Gastrocnemius medialis (tissue), 4 donors: ENCODE measurements at regions of chr7 and their contacts with region 1.

Region 1: GRCh38 chr7:151226875-151227782 is at the start of gene ABCF2:
- DNase-seq: peak; percentile 97 to 99
- ATAC-seq: peak; percentile 97
- H3K4me3 ChIP-seq: peak within 1 kb of the TSS; percentile 70 to 90 (median 82)
- H3K27ac ChIP-seq: peak within 1 kb of the TSS; percentile 83 to 91 (median 85)
- H3K4me1 ChIP-seq: peaks cover 27 to 32% of the 10 kb centered on the region in 2 donors
- H3K27me3 ChIP-seq: no peaks in the 10 kb centered on the region
- CTCF ChIP-seq: no peak
- POLR2A ChIP-seq: peak; percentile 74 to 83
- total RNA-seq, gene ABCF2: 73.3 to 119 (median 96.3) TPM

Region 2: GRCh38 chr7:151085691-151086620 is 141.2 kb before region 1 on chr7 and contains the start of gene AGAP3:
- in situ Hi-C with region 1: no loop called
- intact Hi-C with region 1: loop called (anchors 5 kb)
- DNase-seq: peak; percentile 83 to 86
- ATAC-seq: peak; percentile 44 to 55
- H3K4me3 ChIP-seq: peak within 1 kb of the TSS; percentile 72 to 95 (median 84)
- H3K27ac ChIP-seq: peak within 1 kb of the TSS; percentile 86 to 96 (median 92)
- H3K4me1 ChIP-seq: peaks cover 44 to 56% of the 10 kb centered on the region in 2 donors
- H3K27me3 ChIP-seq: no peaks in the 10 kb centered on the region
- CTCF ChIP-seq: no peak
- POLR2A ChIP-seq: peak; percentile 79 to 85
- total RNA-seq, gene AGAP3: 31.1 to 65.3 (median 36.3) TPM

Region 3: DNA sequence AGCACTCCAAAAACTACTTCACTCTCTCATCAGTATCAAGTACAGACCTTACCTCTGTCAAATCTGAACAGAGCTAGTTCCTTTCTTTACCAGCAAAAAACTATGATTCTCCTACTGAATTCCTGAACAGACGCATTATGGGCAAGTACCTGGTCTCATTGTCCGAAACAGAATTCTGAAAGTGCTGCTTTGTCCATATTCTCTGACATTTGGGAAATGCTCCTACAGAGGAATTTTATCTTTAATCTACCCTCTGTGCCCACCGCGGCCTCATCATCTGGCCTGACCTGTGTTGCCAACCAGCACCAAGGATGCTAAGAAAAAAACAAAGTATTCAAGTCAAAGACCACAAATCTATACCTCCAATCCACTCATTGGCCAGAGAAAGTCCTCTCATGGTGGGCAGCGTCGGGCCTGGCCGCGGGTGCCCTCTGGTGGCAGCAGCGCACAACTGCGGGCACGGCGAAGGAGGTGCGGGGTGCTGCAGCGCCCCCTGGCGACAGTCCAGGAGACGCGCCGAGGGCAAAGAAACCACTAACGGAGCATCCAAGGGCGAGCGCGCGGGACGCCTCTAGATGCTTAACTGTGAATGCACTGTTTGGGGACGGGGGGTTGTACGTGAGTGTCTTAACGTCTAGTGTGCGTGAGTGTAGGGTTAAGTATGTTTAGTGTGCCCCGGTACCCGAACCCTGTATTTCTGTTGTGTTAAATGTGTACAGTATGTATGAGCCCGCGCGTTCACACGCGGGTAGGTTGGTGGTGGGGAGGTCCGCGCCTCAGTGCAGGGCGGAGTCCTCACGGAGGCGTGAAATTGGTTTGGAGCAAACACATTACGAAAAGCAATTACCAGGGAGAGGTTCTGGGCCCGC is 54.6 kb before region 1 on chr7:
- in situ Hi-C with region 1: no loop called
- intact Hi-C with region 1: loop called (anchors 5 kb)
- DNase-seq: peak; percentile 53 to 71
- ATAC-seq: peak; percentile 60 to 79
- H3K4me3 ChIP-seq: no peak overlapping the region
- H3K27ac ChIP-seq: peak overlapping the region in 1 of 4 donors; percentile 33
- H3K4me1 ChIP-seq: peaks cover 3 to 17% of the 10 kb centered on the region in 2 donors
- H3K27me3 ChIP-seq: no peaks in the 10 kb centered on the region
- CTCF ChIP-seq: peak; percentile 99 to 100 (median 100)
- POLR2A ChIP-seq: no peak

Region 4: DNA sequence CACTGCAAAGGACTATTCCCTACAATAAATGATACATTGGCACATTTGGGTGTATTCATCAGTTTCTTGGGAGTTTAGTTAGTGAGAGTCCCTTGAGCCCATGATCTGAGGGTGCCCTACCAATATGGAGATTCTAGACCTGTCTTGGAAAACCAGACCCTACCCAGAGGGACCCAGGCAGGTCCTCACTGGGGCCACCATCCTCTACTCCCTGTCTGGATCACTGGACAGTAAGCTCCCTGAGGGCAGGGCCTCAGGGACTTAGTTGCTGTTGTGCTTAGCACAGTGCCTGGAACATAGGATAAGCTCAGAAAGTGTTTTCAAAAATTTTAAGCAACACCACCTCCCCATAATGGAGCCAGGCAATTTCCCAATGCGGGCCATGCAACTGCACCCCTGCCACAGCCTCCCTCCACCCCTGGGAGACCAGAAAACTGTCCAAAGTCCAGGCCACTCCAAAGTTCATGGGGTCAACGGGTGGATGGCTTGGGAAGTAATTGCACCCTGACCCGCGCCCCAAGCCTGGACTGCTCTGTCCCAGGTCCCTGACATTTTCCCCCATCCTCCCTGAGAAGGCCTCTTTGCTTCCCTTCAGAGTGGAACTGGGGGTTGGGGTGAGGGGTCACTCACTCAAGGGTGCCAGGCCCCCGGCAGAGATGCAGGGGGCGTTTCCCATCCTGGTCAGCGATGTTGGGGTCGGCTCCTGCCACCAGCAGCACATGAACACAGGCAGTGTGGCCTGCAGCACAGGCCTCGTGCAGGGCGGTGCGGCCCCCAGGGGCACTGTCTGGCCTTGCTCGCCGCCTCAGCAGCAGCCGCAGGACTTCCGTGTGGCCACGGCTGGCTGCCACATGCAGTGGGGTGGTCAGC is 41.1 kb before region 1 on chr7:
- in situ Hi-C with region 1: no loop called
- intact Hi-C with region 1: loop called (anchors 2 kb)
- DNase-seq: peak in 1 of 2 donors; percentile 55
- ATAC-seq: peak; percentile 28 to 33
- H3K4me3 ChIP-seq: peak overlapping the region; percentile 57 to 62 (median 60)
- H3K27ac ChIP-seq: peak overlapping the region; percentile 91 to 100 (median 99)
- H3K4me1 ChIP-seq: peaks cover 32 to 41% of the 10 kb centered on the region in 2 donors
- H3K27me3 ChIP-seq: no peaks in the 10 kb centered on the region
- CTCF ChIP-seq: peak in 2 of 5 experiments; percentile 12 to 40
- POLR2A ChIP-seq: no peak

Region 5: DNA sequence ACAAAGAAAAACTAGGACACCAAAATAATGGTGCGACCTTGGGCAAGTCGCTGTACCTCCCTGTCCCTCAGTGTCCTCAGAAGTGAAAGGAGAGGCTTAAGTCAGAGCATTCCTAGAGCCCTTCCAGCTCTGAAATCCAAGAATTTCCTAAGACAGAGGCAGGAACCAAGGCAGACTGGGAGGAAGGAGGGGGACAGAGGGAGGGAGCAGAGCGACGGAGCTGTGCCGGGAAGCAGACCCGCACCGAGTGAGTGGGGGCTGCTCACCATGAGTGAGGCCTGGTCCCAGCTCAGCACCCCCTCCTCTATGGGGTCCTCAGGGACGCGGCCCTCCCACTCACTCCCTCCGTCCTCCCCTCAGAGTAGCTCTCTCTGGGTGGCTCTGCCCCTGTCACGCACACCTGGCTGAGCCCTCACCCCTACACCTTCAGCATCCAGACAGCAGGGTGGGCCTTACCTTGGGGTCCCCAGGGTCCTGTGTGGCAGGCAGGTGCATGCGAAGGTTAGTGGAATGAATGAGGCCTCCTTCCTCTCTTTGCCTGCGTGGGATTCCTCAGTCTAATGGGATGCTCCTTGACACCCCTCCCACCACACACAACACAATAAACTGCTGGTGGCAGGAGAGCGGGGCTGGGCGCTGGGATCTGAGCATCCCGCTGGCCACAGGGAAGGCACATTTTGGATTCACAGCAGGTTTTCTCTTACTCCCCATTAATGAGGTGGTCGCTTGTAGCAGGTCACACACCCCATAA is 26.0 kb after region 1 on chr7:
- in situ Hi-C with region 1: no loop called
- intact Hi-C with region 1: no loop called
- DNase-seq: no peak
- ATAC-seq: no peak
- H3K4me3 ChIP-seq: peak overlapping the region in 2 of 4 donors; percentile 64 to 94
- H3K27ac ChIP-seq: peak overlapping the region; percentile 92 to 100 (median 98)
- H3K4me1 ChIP-seq: peaks cover 28 to 36% of the 10 kb centered on the region in 2 donors
- H3K27me3 ChIP-seq: no peaks in the 10 kb centered on the region
- CTCF ChIP-seq: no peak
- POLR2A ChIP-seq: no peak

Region 6: GRCh38 chr7:151304856-151305255 is 77.7 kb after region 1 on chr7:
- in situ Hi-C with region 1: no loop called
- intact Hi-C with region 1: no loop called
- DNase-seq: no peak
- ATAC-seq: no peak
- H3K4me3 ChIP-seq: peak overlapping the region in 1 of 4 donors; percentile 21
- H3K27ac ChIP-seq: no peak overlapping the region
- H3K4me1 ChIP-seq: peaks cover 0 to 4% of the 10 kb centered on the region in 2 donors
- H3K27me3 ChIP-seq: peaks cover 10 to 16% (median 15%) of the 10 kb centered on the region in 3 donors
- CTCF ChIP-seq: no peak
- POLR2A ChIP-seq: no peak

Region 7: DNA sequence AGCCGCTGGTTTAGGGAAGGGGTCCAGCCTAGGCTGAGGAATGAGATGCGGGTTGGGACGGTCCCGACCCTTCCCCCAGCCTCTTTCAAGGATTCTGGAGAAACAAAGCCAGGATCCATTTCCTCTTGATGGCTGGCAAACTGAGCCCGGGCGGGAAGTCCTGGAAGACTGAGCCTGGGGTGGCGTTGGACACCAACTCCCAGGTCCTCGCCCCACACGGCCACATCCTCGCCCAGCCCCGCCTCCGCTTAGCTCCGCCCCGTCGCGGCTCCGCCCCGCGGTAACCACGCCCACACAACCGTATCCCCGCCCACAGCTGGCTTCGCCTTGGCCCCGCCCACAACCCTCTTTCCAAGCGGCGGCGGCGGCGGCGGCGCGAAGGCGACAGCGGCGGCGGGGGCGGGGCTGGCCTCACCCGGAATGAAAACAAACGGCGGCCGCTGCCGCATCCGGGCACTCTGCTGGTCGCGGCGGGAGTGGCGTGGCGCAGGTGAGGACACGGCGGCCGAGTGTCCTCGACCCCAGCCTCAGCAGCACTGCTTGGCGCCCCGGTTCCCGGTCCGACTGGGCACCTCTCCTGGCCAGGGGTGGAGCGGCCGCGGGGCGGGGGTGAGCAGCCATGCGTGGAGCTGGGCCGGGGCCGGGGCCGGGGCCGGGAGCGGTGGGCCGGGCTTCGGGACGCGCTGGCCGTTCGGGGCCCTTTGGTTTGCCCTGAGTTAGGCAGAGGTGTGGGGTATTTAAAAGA is 114.4 kb after region 1 on chr7 and contains the start of gene NUB1:
- in situ Hi-C with region 1: no loop called
- intact Hi-C with region 1: loop called (anchors 5 kb)
- DNase-seq: peak; percentile 88 to 89
- ATAC-seq: peak; percentile 96 to 97
- H3K4me3 ChIP-seq: peak within 1 kb of the TSS; percentile 72 to 77 (median 74)
- H3K27ac ChIP-seq: peak within 1 kb of the TSS; percentile 73 to 90 (median 86)
- H3K4me1 ChIP-seq: peaks cover 9 to 20% of the 10 kb centered on the region in 2 donors
- H3K27me3 ChIP-seq: no peaks in the 10 kb centered on the region
- CTCF ChIP-seq: no peak
- POLR2A ChIP-seq: peak; percentile 88 to 93
- total RNA-seq, gene NUB1: 45.3 to 59.0 (median 49.7) TPM